Caco-2 (cell line): ENCODE measurements at regions of chrX and their contacts with region 1.

Region 1: GRCh38 chrX:48864210-48864609 is 28.8 kb upstream of the PCSK1N start:
- DNase-seq: no peak
- H3K4me3 ChIP-seq: no peak overlapping the region
- H3K4me3 Mint-ChIP-seq: no peak overlapping the region
- H3K27ac Mint-ChIP-seq: no peak overlapping the region
- H3K4me1 ChIP-seq: peaks cover 9% of the 10 kb centered on the region
- H3K4me1 Mint-ChIP-seq: peaks cover 7% of the 10 kb centered on the region
- H3K27me3 ChIP-seq: no peaks in the 10 kb centered on the region
- H3K27me3 Mint-ChIP-seq: no peaks in the 10 kb centered on the region
- CTCF ChIP-seq: no peak

Region 2: DNA sequence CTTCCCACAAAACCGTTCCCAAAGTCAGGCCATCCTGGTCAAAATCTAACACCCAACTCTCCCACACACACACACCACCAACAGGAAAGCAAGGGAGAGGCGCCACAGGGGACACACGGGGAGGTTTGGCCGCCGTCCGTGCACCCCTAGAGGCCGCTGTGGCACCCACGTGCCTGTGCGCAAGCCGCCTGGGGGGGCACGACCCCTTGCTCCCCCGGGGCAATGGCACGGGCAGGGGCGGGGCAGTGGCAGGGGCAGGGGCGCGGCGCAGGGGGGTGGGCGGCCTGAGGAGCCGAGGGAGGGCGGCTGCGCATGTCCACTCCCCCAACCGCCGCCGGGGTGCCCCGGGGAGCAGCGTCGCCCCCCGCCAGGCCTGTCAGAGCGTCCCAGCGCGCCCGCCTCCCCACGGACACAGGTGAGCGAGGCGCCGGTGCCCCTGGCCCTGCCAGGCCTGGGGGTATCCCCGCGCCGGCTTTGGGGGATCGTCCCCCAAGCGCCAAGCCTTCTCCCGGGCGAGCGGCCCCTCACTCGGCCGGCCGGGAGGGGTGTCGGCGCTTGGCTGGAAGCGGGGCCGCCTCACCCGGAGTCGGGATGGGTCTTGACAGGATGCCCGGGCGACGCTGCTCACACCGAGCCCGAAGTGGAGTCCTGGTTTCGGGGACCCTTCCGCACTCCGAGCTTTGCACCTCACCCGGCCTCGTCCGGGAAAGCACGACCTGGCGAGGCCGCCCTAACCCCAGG is 37.9 kb before region 1 on chrX and contains the start of gene ERAS:
- CTCF ChIA-PET with region 1: no interaction called
- POLR2A ChIA-PET with region 1: no interaction called
- intact Hi-C with region 1: no loop called
- DNase-seq: no peak
- H3K4me3 ChIP-seq: no peak within 1 kb of the TSS
- H3K4me3 Mint-ChIP-seq: no peak within 1 kb of the TSS
- H3K27ac Mint-ChIP-seq: no peak within 1 kb of the TSS
- H3K4me1 ChIP-seq: no peaks in the 10 kb centered on the region
- H3K4me1 Mint-ChIP-seq: no peaks in the 10 kb centered on the region
- H3K27me3 ChIP-seq: no peaks in the 10 kb centered on the region
- H3K27me3 Mint-ChIP-seq: no peaks in the 10 kb centered on the region
- CTCF ChIP-seq: no peak
- total RNA-seq, gene ERAS: not detected in 2 replicates

Region 3: GRCh38 chrX:48897621-48898306 is 33.6 kb after region 1 on chrX and contains the starts of genes PQBP1 and TIMM17B:
- CTCF ChIA-PET with region 1: no interaction called
- POLR2A ChIA-PET with region 1: interaction called, 10 read pairs
- intact Hi-C with region 1: loop called (anchors 1 kb)
- DNase-seq: peak; percentile 91 to 94
- H3K4me3 ChIP-seq: peak within 1 kb of the TSS; percentile 90
- H3K4me3 Mint-ChIP-seq: peak within 1 kb of the TSS; percentile 89
- H3K27ac Mint-ChIP-seq: peak within 1 kb of the TSS; percentile 98
- H3K4me1 ChIP-seq: no peaks in the 10 kb centered on the region
- H3K4me1 Mint-ChIP-seq: no peaks in the 10 kb centered on the region
- H3K27me3 ChIP-seq: no peaks in the 10 kb centered on the region
- H3K27me3 Mint-ChIP-seq: no peaks in the 10 kb centered on the region
- CTCF ChIP-seq: no peak
- total RNA-seq, gene PQBP1: 111 and 114 TPM in 2 replicates
- total RNA-seq, gene TIMM17B: 82.5 and 90.6 TPM in 2 replicates

Region 4: GRCh38 chrX:48927736-48928382 is 63.6 kb after region 1 on chrX:
- CTCF ChIA-PET with region 1: no interaction called
- POLR2A ChIA-PET with region 1: no interaction called
- intact Hi-C with region 1: no loop called
- DNase-seq: no peak
- H3K4me3 ChIP-seq: no peak overlapping the region
- H3K4me3 Mint-ChIP-seq: no peak overlapping the region
- H3K27ac Mint-ChIP-seq: no peak overlapping the region
- H3K4me1 ChIP-seq: no peaks in the 10 kb centered on the region
- H3K4me1 Mint-ChIP-seq: no peaks in the 10 kb centered on the region
- H3K27me3 ChIP-seq: no peaks in the 10 kb centered on the region
- H3K27me3 Mint-ChIP-seq: no peaks in the 10 kb centered on the region
- CTCF ChIP-seq: no peak

Region 5: GRCh38 chrX:48989483-48989882 is 125.3 kb after region 1 on chrX:
- CTCF ChIA-PET with region 1: no interaction called
- POLR2A ChIA-PET with region 1: no interaction called
- intact Hi-C with region 1: no loop called
- DNase-seq: no peak
- H3K4me3 ChIP-seq: no peak overlapping the region
- H3K4me3 Mint-ChIP-seq: no peak overlapping the region
- H3K27ac Mint-ChIP-seq: no peak overlapping the region
- H3K4me1 ChIP-seq: no peaks in the 10 kb centered on the region
- H3K4me1 Mint-ChIP-seq: no peaks in the 10 kb centered on the region
- H3K27me3 ChIP-seq: no peaks in the 10 kb centered on the region
- H3K27me3 Mint-ChIP-seq: no peaks in the 10 kb centered on the region
- CTCF ChIP-seq: no peak